ENCODE measurements at regions of chr5 and their contacts with region 1.

Region 1: GRCh38 chr5:14644623-14645237 is 19.8 kb upstream of the OTULIN start:
- DNase-seq: no peak
- ATAC-seq: no peak

Region 2: DNA sequence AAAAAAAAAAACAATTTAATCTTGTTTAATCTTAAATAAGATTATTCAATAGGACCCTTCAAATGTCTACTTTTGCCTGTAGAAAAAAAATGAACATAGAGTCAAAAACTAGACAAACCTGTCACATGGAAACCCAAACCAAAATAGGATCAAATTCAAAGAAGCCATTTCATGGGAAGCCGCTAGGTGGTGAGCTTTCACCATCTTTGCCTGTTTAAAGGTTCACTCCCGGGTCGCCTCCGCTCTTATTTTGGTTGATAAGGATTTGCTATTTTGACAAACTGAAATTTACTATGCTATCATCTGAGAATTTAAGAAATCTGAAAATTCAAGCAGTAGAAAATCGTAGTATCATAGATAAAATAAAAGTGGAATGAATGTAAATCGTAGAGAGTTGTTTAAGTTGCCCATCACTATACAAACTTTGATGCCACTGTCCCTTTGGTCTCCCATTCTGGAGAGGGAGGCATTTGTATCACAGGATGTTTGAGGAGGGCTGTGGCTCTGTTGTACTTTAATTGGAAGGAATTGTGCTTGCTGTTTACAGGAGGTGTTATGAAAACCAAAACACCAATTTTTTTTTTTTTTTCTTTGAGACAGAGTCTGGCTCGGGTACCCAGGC is 656.8 kb before region 1 on chr5:
- intact Hi-C with region 1: loop called (anchors 5 to 10 kb)
- DNase-seq: peak; percentile 40
- ATAC-seq: peak; percentile 53 to 72

Region 3: DNA sequence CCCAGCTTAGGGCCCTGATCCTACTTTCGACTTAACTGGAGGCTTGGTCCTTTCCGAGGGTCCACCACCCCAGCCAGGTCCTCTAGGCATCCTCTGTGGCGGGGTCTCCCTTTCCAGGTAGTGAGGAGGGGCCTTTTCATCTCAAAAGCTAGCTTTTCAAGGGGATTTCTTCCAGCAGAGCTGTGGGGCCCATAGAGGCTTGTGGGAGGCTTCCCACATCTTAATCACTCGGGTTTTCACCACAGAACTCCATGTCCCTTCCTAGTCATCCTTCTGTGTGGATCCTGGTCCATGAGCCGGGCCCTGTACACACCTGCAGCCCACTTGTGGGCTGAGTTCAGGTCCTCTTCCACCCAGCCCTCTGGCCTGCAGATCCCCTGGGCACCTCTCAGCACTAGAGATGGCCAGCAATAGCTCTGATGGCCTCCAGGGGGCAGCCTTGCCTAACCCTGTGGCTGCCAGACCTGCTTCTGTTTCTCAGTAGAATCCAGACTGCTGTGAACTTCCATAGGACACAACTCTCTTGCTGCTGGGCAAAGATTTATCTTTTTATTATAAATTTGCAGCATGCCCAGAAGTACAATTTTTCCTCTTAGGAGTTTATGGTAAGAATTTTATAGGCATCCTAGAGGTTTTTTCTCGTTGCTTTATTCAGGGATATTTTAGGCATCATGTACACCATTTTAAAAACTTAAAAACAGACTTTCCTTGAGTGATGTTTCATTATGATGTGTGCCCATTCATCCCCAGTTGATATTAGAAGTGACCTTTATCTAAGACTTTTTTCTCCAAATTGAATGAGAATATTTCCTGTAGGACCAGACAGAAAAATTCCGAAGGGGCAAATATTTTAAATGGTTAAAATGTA is 292.7 kb before region 1 on chr5:
- intact Hi-C with region 1: loop called in 1 of 2 experiments (anchors 1 kb)
- DNase-seq: peak; percentile 57
- ATAC-seq: peak; percentile 89 to 90

Region 4: GRCh38 chr5:14399054-14399692 is 245.6 kb before region 1 on chr5:
- intact Hi-C with region 1: loop called in 1 of 2 experiments (anchors 5 kb)
- DNase-seq: no peak
- ATAC-seq: peak in 1 of 2 donors; percentile 50

Region 5: GRCh38 chr5:14595189-14595588 is 49.5 kb before region 1 on chr5:
- intact Hi-C with region 1: no loop called
- DNase-seq: no peak
- ATAC-seq: peak; percentile 71 to 80